ENCODE measurements at regions of chr16 and their contacts with region 1.

Region 1: GRCh38 chr16:11370084-11370931 is 25.0 kb downstream of the RMI2 start:
- DNase-seq: no peak
- H3K4me3 ChIP-seq: no peak overlapping the region
- H3K27ac ChIP-seq: no peak overlapping the region
- H3K4me1 ChIP-seq: no peaks in the 10 kb centered on the region; a peak in 3 of 7 replicates
- H3K27me3 ChIP-seq: no peaks in the 10 kb centered on the region
- CTCF ChIP-seq: no peak
- EP300 ChIP-seq: no peak
- POLR2A ChIP-seq: no peak
- RAD21 ChIP-seq: no peak

Region 2: DNA sequence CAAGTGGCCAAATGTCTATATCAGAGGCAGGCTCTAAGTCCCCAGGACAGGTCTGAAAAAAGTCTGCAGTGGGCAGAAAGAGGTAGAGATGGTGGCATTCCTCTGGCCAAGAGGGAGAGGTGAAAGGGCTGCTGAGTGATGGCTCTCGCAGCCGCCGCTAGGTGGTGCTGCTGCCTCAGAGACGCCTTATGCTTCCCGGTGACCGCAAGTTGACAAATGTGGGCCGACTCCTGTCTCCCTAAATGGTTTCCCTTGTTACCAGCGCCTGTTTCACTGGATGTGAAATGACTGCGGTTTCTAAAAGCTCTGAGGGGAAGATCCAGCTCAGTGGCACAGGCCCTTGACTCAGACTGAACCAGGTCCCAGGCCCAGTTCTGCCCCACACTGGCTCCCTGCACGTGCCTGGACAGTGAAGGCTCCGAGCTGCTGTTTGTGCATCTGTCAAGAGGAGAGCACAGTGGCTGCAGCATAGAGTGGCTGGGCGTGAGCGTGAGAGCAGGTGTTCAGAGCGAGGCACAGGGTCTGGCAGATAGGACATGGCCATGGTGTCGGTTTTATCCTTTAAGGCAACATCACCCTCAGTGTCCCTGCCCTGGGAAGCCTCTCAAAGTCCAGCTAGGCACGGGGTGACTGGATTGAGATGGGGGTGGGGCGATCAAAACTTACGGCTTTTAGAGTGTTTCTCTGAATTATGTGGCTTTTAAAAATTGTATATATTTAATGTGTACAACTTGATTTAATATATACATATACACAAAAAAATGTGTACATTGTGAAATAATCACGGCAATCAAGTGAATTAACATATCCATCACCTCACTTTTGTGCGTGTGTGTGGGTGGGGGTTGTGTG is 406.0 kb before region 1 on chr16:
- CTCF ChIA-PET with region 1: interaction called, 13 read pairs
- POLR2A ChIA-PET with region 1: no interaction called
- DNase-seq: peak in 1 of 2 experiments; percentile 89
- H3K4me3 ChIP-seq: no peak overlapping the region
- H3K27ac ChIP-seq: no peak overlapping the region
- H3K4me1 ChIP-seq: peaks cover 0 to 4% (median 2%) of the 10 kb centered on the region in 4 experiments; a peak in 4 of 7 replicates
- H3K27me3 ChIP-seq: no peaks in the 10 kb centered on the region
- CTCF ChIP-seq: peak; percentile 86 to 98 (median 98)
- EP300 ChIP-seq: no peak
- POLR2A ChIP-seq: no peak
- RAD21 ChIP-seq: peak; percentile 92 to 94

Region 3: GRCh38 chr16:10971560-10971961 is 398.7 kb before region 1 on chr16:
- CTCF ChIA-PET with region 1: interaction called, 13 read pairs
- POLR2A ChIA-PET with region 1: no interaction called
- DNase-seq: no peak
- H3K4me3 ChIP-seq: no peak overlapping the region
- H3K27ac ChIP-seq: no peak overlapping the region
- H3K4me1 ChIP-seq: peaks cover 0 to 2% (median 0%) of the 10 kb centered on the region in 4 experiments; a peak in 2 of 7 replicates
- H3K27me3 ChIP-seq: no peaks in the 10 kb centered on the region
- CTCF ChIP-seq: peak in 2 of 3 experiments; percentile 63 to 70; a peak in 3 of 4 replicates
- EP300 ChIP-seq: no peak
- POLR2A ChIP-seq: no peak
- RAD21 ChIP-seq: peak; percentile 81 to 84

Region 4: GRCh38 chr16:10981697-10982216 is 388.6 kb before region 1 on chr16:
- CTCF ChIA-PET with region 1: interaction called, 10 read pairs
- POLR2A ChIA-PET with region 1: interaction called, 3 read pairs
- DNase-seq: peak in 1 of 2 experiments; percentile 69
- H3K4me3 ChIP-seq: no peak overlapping the region
- H3K27ac ChIP-seq: no peak overlapping the region
- H3K4me1 ChIP-seq: 0 out of 7 replicates have a peak, but pooled peaks cover 0 to 2% (median 0%) of the 10 kb centered on the region in 4 experiments
- H3K27me3 ChIP-seq: no peaks in the 10 kb centered on the region
- CTCF ChIP-seq: peak; percentile 75 to 94 (median 86)
- EP300 ChIP-seq: no peak
- POLR2A ChIP-seq: no peak
- RAD21 ChIP-seq: peak; percentile 52 to 66

Region 5: DNA sequence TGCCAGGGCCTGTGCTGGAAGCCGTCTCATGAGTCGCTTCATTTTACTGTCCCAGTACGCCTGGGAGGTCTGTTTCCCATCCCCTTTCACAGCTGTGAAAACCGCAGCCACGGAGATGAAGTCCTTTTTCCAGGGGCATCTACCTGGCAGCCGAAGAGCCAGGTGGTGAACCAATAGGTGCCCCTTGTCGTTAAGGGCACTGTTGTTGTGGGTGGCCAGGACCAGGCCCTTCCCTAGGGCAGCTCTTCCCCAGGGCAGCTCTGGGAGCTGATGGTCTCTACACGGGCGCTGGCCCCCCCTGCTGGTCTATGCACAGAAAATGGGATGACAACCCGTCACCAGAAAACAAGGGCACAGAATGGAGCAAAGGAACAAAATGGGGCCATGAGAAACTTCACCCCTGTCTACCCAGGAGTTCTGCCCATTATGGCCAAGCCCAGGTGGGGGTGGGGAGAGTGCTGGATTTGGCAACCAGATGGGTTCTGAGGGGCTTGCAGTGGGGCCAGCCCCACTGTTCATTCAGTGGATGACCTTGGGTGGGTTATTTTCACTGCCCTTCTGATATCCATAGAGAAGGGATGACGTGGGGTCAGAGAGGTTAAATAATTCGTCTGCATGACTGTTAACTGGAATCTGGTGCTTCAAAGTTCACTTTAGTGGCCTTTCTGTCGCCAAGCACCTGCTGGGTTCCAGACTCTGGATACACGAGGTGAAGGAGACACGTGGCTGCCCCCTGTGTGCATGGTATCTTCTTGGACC is 13.6 kb before region 1 on chr16:
- CTCF ChIA-PET with region 1: interaction called, 46 read pairs
- POLR2A ChIA-PET with region 1: interaction called, 8 read pairs
- DNase-seq: peak; percentile 36 to 85
- H3K4me3 ChIP-seq: no peak overlapping the region
- H3K27ac ChIP-seq: no peak overlapping the region
- H3K4me1 ChIP-seq: peaks cover 0 to 2% (median 0%) of the 10 kb centered on the region in 4 experiments; a peak in 3 of 7 replicates
- H3K27me3 ChIP-seq: no peaks in the 10 kb centered on the region
- CTCF ChIP-seq: peak; percentile 70 to 82 (median 79)
- EP300 ChIP-seq: no peak
- POLR2A ChIP-seq: no peak
- RAD21 ChIP-seq: peak; percentile 90 to 94

Region 6: GRCh38 chr16:11386791-11387546 is 16.7 kb after region 1 on chr16:
- CTCF ChIA-PET with region 1: interaction called, 132 read pairs
- POLR2A ChIA-PET with region 1: interaction called, 6 read pairs
- DNase-seq: peak; percentile 41 to 92
- H3K4me3 ChIP-seq: no peak overlapping the region
- H3K27ac ChIP-seq: no peak overlapping the region
- H3K4me1 ChIP-seq: peaks cover 0 to 29% (median 14%) of the 10 kb centered on the region in 4 experiments; a peak in 5 of 7 replicates
- H3K27me3 ChIP-seq: no peaks in the 10 kb centered on the region
- CTCF ChIP-seq: peak; percentile 86 to 88 (median 86)
- EP300 ChIP-seq: no peak
- POLR2A ChIP-seq: no peak
- RAD21 ChIP-seq: peak; percentile 64 to 76

Region 7: GRCh38 chr16:11396241-11397048 is 26.1 kb after region 1 on chr16:
- CTCF ChIA-PET with region 1: interaction called, 15 read pairs
- POLR2A ChIA-PET with region 1: no interaction called
- DNase-seq: peak; percentile 60 to 98
- H3K4me3 ChIP-seq: no peak overlapping the region
- H3K27ac ChIP-seq: no peak overlapping the region
- H3K4me1 ChIP-seq: peaks cover 0 to 12% (median 7%) of the 10 kb centered on the region in 4 experiments; a peak in 4 of 7 replicates
- H3K27me3 ChIP-seq: no peaks in the 10 kb centered on the region
- CTCF ChIP-seq: peak; percentile 96 to 97 (median 97)
- EP300 ChIP-seq: no peak
- POLR2A ChIP-seq: no peak
- RAD21 ChIP-seq: peak; percentile 99 to 100

Region 8: DNA sequence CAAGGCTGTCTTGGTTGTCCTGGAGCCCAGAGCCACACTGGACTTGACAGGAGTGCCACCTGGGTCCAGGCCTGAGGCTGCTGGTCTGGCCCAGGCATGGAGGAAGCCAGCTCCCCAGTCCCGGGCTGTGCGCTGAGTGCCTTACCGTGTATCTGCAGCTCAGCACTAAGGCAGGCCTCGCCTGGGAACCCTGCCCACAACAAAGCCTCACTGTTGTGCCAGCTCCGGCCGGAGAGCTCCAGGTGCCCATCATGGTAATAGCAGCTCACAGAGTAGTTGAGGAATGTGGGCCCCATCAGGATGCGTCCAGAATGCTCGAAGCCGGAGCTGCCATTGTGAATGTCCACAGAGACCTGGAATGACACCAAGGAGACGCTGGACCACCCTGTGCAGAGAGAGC is 47.2 kb after region 1 on chr16:
- CTCF ChIA-PET with region 1: no interaction called
- POLR2A ChIA-PET with region 1: no interaction called
- DNase-seq: no peak
- H3K4me3 ChIP-seq: no peak overlapping the region
- H3K27ac ChIP-seq: no peak overlapping the region
- H3K4me1 ChIP-seq: peaks cover 0 to 5% (median 0%) of the 10 kb centered on the region in 4 experiments; a peak in 2 of 7 replicates
- H3K27me3 ChIP-seq: no peaks in the 10 kb centered on the region
- CTCF ChIP-seq: no peak
- EP300 ChIP-seq: no peak
- POLR2A ChIP-seq: no peak
- RAD21 ChIP-seq: no peak